IMR-90 (cell line): ENCODE measurements at regions of chr18 and their contacts with region 1.

Region 1: DNA sequence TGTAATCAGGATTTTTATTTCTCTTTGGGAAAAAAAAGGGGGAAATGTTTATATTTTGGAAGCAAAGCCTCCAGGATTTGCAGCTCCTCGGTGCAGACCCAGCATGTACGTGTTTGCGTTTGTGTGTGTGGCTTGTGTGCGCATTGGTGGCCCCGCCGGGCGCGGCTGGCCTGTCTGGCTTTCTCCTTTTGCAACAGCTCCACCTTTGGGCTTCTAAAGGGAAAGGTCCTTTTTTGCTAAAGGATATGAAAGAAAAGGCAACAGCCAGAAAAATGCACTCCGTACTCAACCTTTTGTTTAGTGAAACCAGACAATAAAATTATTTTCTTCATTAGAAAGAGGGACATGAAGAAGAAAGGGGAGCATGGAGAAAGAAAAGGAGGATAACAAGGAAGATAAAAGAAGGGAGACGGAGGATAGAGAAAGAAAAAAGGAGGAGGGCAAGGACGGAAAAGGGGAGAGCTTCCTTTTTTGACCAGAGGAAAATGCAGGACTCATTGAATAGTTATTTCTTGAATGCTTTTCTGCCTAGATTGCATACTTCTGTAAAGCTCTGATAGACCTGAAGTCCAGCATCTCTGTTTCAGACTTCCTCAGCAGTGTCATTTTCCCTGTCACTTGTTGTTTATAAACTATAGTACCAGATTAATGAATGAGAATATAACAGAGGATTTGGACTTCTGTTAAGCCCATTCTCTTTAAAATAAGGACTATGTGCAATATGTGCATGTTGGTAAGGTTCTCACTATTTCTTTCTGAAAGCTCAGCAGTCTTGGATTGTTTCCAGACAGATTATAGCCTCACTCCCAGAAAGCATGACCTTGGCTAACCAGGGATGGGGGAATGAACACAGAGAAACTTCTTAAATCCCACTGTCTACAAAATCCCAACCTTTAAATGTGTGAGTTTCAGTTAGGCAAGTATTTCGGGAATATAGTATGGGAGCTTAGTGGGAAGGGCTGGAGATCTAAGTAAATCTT is 563.1 kb upstream of the PIK3C3 start:
- DNase-seq: peak; percentile 70
- ATAC-seq: peak; percentile 96
- H3K4me3 ChIP-seq: peak overlapping the region; percentile 58
- H3K27ac ChIP-seq: peak overlapping the region; percentile 56; the same call in 1 of the 2 replicates
- H3K4me1 ChIP-seq: no peaks in the 10 kb centered on the region
- H3K27me3 ChIP-seq: no peaks in the 10 kb centered on the region
- CTCF ChIP-seq: peak; percentile 87
- POLR2A ChIP-seq: no peak
- RAD21 ChIP-seq: peak; percentile 91

Region 2: GRCh38 chr18:39571511-39571910 is 1820.4 kb before region 1 on chr18:
- CTCF ChIA-PET with region 1: no interaction called
- POLR2A ChIA-PET with region 1: no interaction called
- dilution Hi-C with region 1: no loop called
- in situ Hi-C with region 1: no loop called
- intact Hi-C with region 1: loop called (anchors 10 kb)
- DNase-seq: peak; percentile 19
- ATAC-seq: no peak
- H3K4me3 ChIP-seq: no peak overlapping the region
- H3K27ac ChIP-seq: no peak overlapping the region
- H3K4me1 ChIP-seq: no peaks in the 10 kb centered on the region
- H3K27me3 ChIP-seq: no peaks in the 10 kb centered on the region
- CTCF ChIP-seq: peak; percentile 38
- POLR2A ChIP-seq: no peak
- RAD21 ChIP-seq: peak; percentile 52

Region 3: DNA sequence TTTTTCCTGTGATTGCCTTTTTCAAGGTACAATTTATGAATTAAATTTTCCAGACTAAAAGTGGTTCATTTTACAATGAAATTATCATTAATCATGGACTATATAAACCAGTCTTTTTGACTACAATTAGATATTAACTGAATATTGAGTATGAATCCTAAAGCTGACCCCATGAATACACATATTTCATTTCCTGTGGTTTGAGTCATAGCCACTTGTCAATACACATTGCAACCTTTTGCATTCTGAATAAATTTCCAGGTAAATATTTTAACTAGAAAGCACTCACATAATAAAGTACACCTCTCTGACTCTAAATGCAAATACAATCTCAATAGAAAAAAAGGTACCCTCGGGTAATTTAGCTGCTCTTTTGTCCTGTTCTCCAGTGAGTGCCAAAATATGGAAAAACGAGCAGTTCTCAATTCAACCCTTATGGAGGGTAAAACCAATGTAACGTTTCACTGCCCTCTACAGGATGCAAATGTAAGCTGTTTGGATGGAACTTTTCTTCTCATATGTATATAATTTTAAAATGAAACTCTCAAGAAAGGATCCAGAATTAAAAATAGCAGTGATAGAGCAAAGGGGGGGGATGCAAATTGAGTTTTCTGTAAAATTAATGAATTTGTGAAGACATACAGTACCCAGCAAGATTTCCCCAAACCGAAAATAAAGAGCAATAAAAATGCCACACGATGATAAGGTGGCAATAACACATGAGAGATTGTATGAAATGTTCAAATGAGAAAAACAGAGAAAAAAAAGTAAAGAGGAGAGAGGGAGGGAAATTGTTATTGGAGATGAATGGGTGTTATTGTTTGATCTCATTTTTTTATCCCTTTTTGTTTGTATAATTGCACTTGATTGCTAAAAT is 1232.5 kb before region 1 on chr18:
- CTCF ChIA-PET with region 1: interaction called, 3 read pairs
- POLR2A ChIA-PET with region 1: no interaction called
- dilution Hi-C with region 1: no loop called
- in situ Hi-C with region 1: no loop called
- intact Hi-C with region 1: loop called (anchors 10 kb)
- DNase-seq: peak; percentile 40
- ATAC-seq: peak; percentile 64
- H3K4me3 ChIP-seq: no peak overlapping the region
- H3K27ac ChIP-seq: no peak overlapping the region
- H3K4me1 ChIP-seq: no peaks in the 10 kb centered on the region
- H3K27me3 ChIP-seq: no peaks in the 10 kb centered on the region
- CTCF ChIP-seq: peak; percentile 54
- POLR2A ChIP-seq: no peak
- RAD21 ChIP-seq: peak; percentile 51

Region 4: DNA sequence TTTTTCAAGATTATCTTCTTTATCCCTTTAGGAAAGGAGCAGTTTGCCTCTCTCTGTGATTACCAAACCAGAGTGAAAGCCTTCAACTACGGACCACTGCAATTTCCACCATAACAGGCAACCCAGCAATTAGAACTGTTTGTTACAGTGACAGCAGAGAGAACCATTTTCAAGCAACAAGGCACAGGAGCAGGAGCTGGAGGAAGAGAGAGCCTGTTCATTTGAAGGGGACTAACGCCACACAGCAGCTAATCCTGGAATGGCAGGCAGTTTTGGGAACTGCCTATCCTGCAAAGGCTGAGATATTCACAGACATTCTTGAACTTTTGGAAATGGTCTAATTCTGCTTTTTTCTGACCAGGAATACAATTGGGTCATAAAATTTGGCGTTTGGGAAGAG is 978.7 kb before region 1 on chr18:
- CTCF ChIA-PET with region 1: no interaction called
- POLR2A ChIA-PET with region 1: no interaction called
- dilution Hi-C with region 1: no loop called
- in situ Hi-C with region 1: loop called (anchors 25 kb)
- intact Hi-C with region 1: no loop called
- DNase-seq: peak; percentile 45
- ATAC-seq: peak; percentile 63; the same call in 1 of the 2 replicates
- H3K4me3 ChIP-seq: no peak overlapping the region
- H3K27ac ChIP-seq: no peak overlapping the region
- H3K4me1 ChIP-seq: no peaks in the 10 kb centered on the region
- H3K27me3 ChIP-seq: no peaks in the 10 kb centered on the region
- CTCF ChIP-seq: peak; percentile 57
- POLR2A ChIP-seq: no peak
- RAD21 ChIP-seq: peak; percentile 75

Region 5: DNA sequence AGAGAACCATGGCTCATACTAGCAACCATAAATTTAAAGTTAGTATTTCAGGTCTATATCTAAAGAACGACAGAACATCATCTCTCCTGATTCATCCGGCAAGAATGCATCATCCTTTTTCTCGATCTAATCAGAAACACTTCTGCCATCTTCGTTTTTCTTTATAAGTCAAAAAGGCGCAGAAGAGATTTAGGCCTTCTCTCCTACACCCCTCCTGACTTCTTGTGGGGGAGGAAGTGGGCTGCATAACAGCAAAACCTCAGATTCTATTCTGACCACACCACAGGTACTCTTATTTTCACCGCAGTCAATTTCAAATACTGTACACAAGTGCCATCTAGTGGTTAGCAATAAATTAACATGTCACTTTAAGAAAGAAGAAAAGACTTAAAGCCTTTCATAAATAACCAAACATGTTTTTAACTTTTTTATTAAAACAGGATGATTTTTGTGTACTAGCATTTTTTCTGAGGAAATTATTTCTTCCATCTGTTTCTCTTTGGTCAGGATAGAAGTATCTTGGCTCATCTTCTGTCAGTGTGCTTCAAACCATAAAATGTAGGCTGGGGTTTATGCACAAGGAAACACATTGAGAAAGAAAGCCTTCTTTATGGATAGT is 514.7 kb after region 1 on chr18:
- CTCF ChIA-PET with region 1: no interaction called
- POLR2A ChIA-PET with region 1: no interaction called
- dilution Hi-C with region 1: no loop called
- in situ Hi-C with region 1: no loop called
- intact Hi-C with region 1: loop called (anchors 5 kb)
- DNase-seq: peak; percentile 69
- ATAC-seq: peak; percentile 75
- H3K4me3 ChIP-seq: peak overlapping the region; percentile 30; the same call in 1 of the 2 replicates
- H3K27ac ChIP-seq: no peak overlapping the region
- H3K4me1 ChIP-seq: no peaks in the 10 kb centered on the region
- H3K27me3 ChIP-seq: no peaks in the 10 kb centered on the region
- CTCF ChIP-seq: peak; percentile 63
- POLR2A ChIP-seq: no peak
- RAD21 ChIP-seq: peak; percentile 78